A673 (cell line): ENCODE measurements at regions of chr13 and their contacts with region 1.

Region 1: DNA sequence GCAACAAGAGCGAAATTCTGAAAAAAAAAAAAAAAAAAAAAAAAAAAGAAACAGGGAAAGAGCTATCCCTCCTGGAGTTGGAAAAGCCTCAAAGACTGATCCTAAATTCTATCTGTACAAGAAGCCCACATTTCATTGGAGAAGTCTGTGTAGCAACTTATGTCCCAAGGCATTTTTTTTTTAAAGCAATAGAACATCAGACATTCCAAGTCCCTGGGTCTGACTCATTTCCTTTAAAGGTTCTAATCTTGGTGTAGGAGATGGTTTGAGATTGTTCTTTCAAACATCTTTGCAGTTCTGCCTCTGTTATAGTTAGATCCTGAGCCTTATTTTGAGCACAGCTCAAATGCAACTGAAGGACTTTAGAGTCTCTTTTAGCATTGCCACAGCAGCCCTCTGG is 706.5 kb upstream of the MIR17HG start:
- DNase-seq: peak; percentile 4
- H3K4me3 ChIP-seq: no peak overlapping the region
- H3K27ac ChIP-seq: no peak overlapping the region
- H3K4me1 ChIP-seq: no peaks in the 10 kb centered on the region
- H3K27me3 ChIP-seq: no peaks in the 10 kb centered on the region
- CTCF ChIP-seq: no peak

Region 2: DNA sequence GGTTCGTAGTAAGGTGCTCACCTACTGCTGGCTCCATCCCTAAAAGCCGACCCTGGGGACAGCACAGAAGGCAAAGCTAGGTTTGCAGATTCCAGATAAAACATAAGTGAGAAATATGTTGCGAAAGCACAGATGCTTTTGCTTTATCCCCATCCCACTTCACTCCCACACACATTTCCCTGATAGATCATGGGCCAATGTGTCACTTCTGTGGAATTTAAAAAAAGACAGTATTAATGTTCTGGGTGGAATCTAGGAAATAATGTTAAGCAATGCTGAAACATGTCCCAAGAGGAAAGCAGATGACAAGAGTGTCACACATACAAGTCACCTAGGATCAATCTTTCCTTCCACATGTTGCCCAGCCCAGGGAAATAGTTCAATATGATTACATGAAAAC is 45.5 kb after region 1 on chr13:
- CTCF ChIA-PET with region 1: no interaction called
- POLR2A ChIA-PET with region 1: interaction called, 11 read pairs
- intact Hi-C with region 1: no loop called
- DNase-seq: peak; percentile 53
- H3K4me3 ChIP-seq: no peak overlapping the region
- H3K27ac ChIP-seq: no peak overlapping the region
- H3K4me1 ChIP-seq: peaks cover 13% of the 10 kb centered on the region
- H3K27me3 ChIP-seq: no peaks in the 10 kb centered on the region
- CTCF ChIP-seq: no peak

Region 3: GRCh38 chr13:91249861-91250260 is 608.9 kb after region 1 on chr13:
- CTCF ChIA-PET with region 1: no interaction called
- POLR2A ChIA-PET with region 1: no interaction called
- intact Hi-C with region 1: no loop called
- DNase-seq: no peak
- H3K4me3 ChIP-seq: no peak overlapping the region
- H3K27ac ChIP-seq: no peak overlapping the region
- H3K4me1 ChIP-seq: no peaks in the 10 kb centered on the region
- H3K27me3 ChIP-seq: peaks cover 87% of the 10 kb centered on the region
- CTCF ChIP-seq: no peak